CD8-positive, alpha-beta memory T cell (primary cell): ENCODE measurements at regions of chr3 and their contacts with region 1.

Region 1: DNA sequence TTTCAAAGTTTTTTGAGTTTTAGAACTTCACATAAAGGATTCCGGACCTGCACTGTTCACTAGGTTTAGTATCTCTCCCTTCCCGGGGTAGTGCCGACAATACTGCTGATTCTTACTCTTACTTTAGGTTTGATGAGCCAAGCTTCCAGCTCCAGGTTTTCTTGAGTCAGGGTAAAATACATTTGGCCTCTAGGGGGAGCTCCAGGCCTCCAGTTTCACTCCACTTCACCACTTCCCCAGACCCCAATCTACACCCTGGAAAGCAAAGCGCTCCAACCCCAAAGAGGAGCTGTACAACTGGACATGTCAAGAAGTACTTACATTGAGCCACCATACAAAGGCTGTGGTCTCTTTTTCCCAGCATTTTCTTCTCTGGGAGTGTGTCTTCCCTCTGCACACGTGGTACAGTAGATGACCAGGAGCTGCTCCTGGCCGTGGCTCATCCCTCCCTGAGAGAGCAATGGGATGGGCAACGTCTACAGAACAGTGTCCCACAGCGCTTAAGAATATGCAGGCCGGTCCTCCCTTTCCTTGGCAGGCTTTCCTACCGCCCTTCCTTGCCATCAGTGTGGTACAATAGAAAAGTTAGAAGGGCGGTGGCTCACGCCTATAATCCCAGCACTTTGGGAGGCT is 93.9 kb upstream of the CCDC80 start:
- DNase-seq: peak; percentile 47 to 71 (median 66)
- H3K4me3 ChIP-seq: no peak overlapping the region
- H3K4me3 Mint-ChIP-seq: no peak overlapping the region
- H3K27ac ChIP-seq: no peak overlapping the region
- H3K27ac Mint-ChIP-seq: peak overlapping the region in 1 of 8 donors; percentile 59
- H3K4me1 ChIP-seq: peaks cover 45% of the 10 kb centered on the region
- H3K4me1 Mint-ChIP-seq: peaks cover 34 to 47% (median 45%) of the 10 kb centered on the region in 3 donors
- H3K27me3 ChIP-seq: no peaks in the 10 kb centered on the region
- H3K27me3 Mint-ChIP-seq: peaks cover 0 to 1% of the 10 kb centered on the region in 2 donors

Region 2: DNA sequence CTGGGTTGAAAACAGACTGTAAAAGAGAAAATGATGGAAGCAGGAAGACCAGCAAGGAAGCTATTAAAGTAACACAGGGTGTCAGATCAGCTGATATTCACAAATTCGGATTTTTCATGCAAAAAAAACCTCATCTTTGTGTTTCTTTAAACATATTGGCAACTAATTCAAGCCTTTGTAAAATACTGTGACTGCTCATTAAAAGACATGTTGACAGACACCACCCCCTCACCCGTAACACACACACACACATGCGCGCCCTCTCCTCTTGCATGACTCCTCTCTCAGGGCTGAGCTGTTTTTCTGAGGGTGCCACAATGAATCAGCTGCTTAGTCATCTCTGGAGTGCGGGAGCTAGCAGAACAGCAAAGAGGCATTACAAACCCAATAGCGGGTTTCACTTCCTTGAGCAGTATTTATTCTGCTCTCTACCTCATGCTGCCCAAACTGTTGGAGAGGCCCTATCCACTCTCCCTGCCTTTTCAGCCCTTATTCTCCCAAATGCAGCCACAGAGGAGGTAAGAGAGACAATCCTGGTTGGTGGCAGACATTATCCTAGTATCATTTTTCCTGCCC is 58.1 kb before region 1 on chr3:
- CTCF ChIA-PET with region 1: interaction called, 12 read pairs
- POLR2A ChIA-PET with region 1: interaction called, 3 read pairs
- DNase-seq: peak in 4 of 5 donors; percentile 24 to 90 (median 54)
- H3K4me3 ChIP-seq: no peak overlapping the region
- H3K4me3 Mint-ChIP-seq: peak overlapping the region; percentile 1 to 66 (median 51)
- H3K27ac ChIP-seq: no peak overlapping the region
- H3K27ac Mint-ChIP-seq: peak overlapping the region; percentile 11 to 87 (median 75)
- H3K4me1 ChIP-seq: peaks cover 44% of the 10 kb centered on the region
- H3K4me1 Mint-ChIP-seq: peaks cover 52 to 68% (median 64%) of the 10 kb centered on the region in 3 donors
- H3K27me3 ChIP-seq: no peaks in the 10 kb centered on the region
- H3K27me3 Mint-ChIP-seq: peaks cover 0 to 1% of the 10 kb centered on the region in 2 donors

Region 3: DNA sequence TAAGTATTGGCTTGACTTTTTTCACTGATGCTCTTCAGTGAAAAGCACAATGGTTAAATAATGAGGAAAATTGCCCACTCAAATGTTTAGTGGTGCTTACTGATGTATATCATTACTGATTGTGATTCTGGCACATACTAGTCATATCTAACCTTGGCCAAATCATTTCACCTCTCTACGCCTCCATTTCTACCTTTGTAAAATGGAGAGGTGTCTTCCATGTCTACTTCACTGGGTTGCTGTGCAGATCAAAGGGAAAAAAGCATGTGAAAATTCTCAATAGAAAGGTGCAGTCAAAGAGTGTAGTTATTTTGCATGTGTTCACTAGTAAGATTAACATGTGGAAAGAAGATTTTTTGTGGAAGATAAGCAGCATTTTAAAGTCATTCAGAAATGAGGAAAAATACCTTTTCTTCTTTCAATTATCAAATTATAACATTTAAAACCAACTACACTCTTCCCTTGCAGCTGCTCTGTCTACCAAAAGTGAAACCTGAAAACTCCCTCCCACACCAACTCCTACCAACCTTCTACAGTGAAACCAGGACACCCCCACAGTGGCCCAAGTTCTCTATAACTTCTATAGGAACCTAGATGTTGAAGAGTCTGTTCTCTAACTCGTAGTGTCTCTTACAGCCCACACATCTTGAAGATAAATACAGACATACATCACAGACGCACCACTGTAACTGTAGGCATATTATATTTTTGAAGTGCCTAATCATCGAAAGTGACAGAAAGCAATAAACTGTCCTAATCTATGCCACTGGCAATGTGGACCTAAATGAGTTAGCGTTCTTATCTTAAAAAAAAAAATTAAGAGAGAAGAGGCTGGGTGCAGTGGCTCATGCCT is 238.7 kb after region 1 on chr3:
- CTCF ChIA-PET with region 1: interaction called, 53 read pairs
- POLR2A ChIA-PET with region 1: interaction called, 7 read pairs
- DNase-seq: peak in 3 of 5 donors; percentile 39 to 56 (median 55)
- H3K4me3 ChIP-seq: peak overlapping the region; percentile 60
- H3K4me3 Mint-ChIP-seq: peak overlapping the region; percentile 89 to 96 (median 95)
- H3K27ac ChIP-seq: peak overlapping the region; percentile 45
- H3K27ac Mint-ChIP-seq: peak overlapping the region; percentile 80 to 97 (median 91)
- H3K4me1 ChIP-seq: peaks cover 55% of the 10 kb centered on the region
- H3K4me1 Mint-ChIP-seq: peaks cover 66 to 94% (median 93%) of the 10 kb centered on the region in 3 donors
- H3K27me3 ChIP-seq: no peaks in the 10 kb centered on the region
- H3K27me3 Mint-ChIP-seq: no peaks in the 10 kb centered on the region

Region 4: GRCh38 chr3:112990672-112991602 is 256.1 kb after region 1 on chr3 and contains the start of gene GTPBP8:
- CTCF ChIA-PET with region 1: interaction called, 10 read pairs
- POLR2A ChIA-PET with region 1: no interaction called
- DNase-seq: peak; percentile 76 to 87 (median 79)
- H3K4me3 ChIP-seq: peak within 1 kb of the TSS; percentile 91
- H3K4me3 Mint-ChIP-seq: peak within 1 kb of the TSS; percentile 95 to 98 (median 97)
- H3K27ac ChIP-seq: peak within 1 kb of the TSS; percentile 95
- H3K27ac Mint-ChIP-seq: peak within 1 kb of the TSS; percentile 92 to 98 (median 96)
- H3K4me1 ChIP-seq: peaks cover 23% of the 10 kb centered on the region
- H3K4me1 Mint-ChIP-seq: peaks cover 49 to 74% (median 64%) of the 10 kb centered on the region in 3 donors
- H3K27me3 ChIP-seq: no peaks in the 10 kb centered on the region
- H3K27me3 Mint-ChIP-seq: peaks cover 0 to 2% of the 10 kb centered on the region in 2 donors
- total RNA-seq, gene GTPBP8: 29.3 to 29.4 TPM